Dorsolateral prefrontal cortex (tissue), 120 donors: ENCODE measurements at regions of chr18 and their contacts with region 1.

Region 1: GRCh38 chr18:27599202-27599829 is 414.2 kb upstream of the CHST9 start:
- DNase-seq: peak in 8 of 10 donors; percentile 27 to 75 (median 55)
- H3K4me3 ChIP-seq: no peak overlapping the region
- H3K27ac ChIP-seq: no peak overlapping the region
- H3K27me3 ChIP-seq: no peaks in the 10 kb centered on the region
- CTCF ChIP-seq: peak; percentile 69 to 96 (median 85)

Region 2: GRCh38 chr18:27017901-27018500 is 581.3 kb before region 1 on chr18:
- intact Hi-C with region 1: loop called in 1 of 2 experiments (anchors 5 kb)
- DNase-seq: no peak
- H3K4me3 ChIP-seq: no peak overlapping the region
- H3K27ac ChIP-seq: no peak overlapping the region
- H3K27me3 ChIP-seq: no peaks in the 10 kb centered on the region
- CTCF ChIP-seq: peak in 55 of 56 donors; percentile 23 to 75 (median 61)

Region 3: DNA sequence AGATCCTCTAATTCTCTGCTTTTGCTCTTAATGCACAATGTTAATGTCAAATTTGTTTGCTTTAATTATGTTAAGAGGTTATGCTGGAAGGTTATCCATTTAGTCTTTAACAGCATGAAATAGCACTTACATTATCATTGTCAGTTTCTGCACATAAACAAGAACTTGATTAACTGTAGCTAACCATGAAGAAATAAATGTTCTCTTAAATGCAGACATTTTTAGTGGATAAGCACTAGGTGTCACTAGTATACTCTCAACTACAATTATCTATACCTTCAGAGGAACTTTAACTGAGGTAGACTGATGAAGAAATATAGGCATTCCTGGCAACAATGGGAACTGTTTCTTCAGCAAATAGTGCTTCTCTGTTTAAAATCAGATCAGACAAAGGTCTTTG is 235.4 kb before region 1 on chr18:
- intact Hi-C with region 1: loop called (anchors 5 to 10 kb)
- DNase-seq: no peak
- H3K4me3 ChIP-seq: no peak overlapping the region
- H3K27ac ChIP-seq: no peak overlapping the region
- H3K27me3 ChIP-seq: peaks cover 0 to 15% (median 0%) of the 10 kb centered on the region in 45 donors
- CTCF ChIP-seq: peak in 51 of 56 donors; percentile 9 to 66 (median 37)